Cardiac septum (tissue), 1 donor: ENCODE measurements at regions of chr17 and their contacts with region 1.

Region 1: GRCh38 chr17:43125133-43125966 is at the start of gene BRCA1:
- DNase-seq: peak; percentile 94
- total RNA-seq, gene BRCA1: 6.1 TPM

Region 2: DNA sequence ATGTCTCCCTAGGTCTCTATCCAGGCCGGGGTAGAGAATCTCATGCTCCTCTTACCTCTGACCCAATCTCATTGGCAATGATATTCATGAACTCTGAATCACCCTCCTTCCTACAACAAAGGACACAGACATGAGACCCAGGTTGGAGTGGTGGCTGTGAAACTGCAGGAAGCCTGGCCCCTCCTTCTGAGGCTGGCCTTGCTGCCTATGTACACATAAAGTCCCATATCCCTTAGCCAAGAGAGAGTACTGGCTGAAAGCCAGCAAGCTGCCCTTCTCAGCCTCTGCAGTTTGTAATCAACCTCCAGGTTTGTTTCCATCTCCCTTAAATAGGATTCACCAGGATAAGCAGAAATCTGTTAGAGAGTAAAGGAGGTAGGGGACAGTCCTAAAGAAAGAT is 171.7 kb before region 1 on chr17:
- intact Hi-C with region 1: no loop called
- DNase-seq: no peak

Region 3: DNA sequence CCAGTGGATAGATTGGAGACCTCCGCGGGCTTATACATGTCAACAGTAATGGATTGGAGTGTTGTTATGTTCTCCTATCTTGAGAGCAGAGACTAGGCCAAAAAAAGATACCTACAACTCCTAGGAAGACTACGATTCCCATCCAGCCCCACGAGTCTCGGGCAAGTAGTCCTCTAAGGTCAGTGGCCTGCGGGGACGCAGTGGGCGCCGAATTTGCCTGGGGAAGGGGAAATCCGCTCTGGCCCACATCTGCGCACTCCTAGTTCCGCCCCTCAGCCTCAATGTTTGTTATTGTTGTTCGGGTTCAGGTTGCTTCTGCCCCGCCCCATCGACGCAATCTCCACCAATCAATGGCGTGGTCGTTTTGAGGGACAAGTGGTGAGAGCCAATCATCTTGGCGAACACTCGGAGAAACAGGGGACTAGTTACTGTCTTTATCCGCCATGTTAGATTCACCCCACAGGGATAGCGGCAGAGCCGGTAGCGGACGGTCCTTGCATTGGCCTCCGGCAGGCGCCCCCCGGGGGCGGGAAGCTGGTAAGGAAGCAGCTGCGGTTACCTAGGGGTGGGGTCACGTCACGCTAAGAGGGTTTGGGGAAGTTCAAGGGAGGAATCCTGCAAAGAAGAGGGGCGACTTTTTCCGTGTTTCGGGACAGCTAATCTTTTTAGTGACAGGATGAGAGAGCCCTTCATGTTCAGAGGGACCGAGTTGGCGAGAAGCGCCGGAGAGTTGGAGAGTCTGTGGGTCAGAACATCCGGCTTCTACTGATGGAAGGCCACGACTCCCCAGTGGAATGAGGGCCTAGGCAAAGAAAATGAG is 45.6 kb after region 1 on chr17 and contains the start of gene NBR1:
- intact Hi-C with region 1: loop called (anchors 1 kb)
- DNase-seq: peak; percentile 96
- total RNA-seq, gene NBR1: 97.6 TPM